Activated B cell treated with CpG ODN at 0.5 μM for 24 hours (primary cell): ENCODE measurements at regions of chr5 and their contacts with region 1.

Region 1: GRCh38 chr5:138752951-138753793 is at the start of gene CTNNA1:
- DNase-seq: peak; percentile 72
- ATAC-seq: peak; percentile 77
- H3K4me3 Mint-ChIP-seq: peak within 1 kb of the TSS; percentile 82
- H3K27ac Mint-ChIP-seq: peak within 1 kb of the TSS; percentile 53
- H3K4me1 Mint-ChIP-seq: peaks cover 26% of the 10 kb centered on the region
- H3K27me3 Mint-ChIP-seq: no peaks in the 10 kb centered on the region
- CTCF ChIP-seq: no peak
- total RNA-seq, gene CTNNA1: 76.0 and 77.7 TPM in 2 replicates

Region 2: DNA sequence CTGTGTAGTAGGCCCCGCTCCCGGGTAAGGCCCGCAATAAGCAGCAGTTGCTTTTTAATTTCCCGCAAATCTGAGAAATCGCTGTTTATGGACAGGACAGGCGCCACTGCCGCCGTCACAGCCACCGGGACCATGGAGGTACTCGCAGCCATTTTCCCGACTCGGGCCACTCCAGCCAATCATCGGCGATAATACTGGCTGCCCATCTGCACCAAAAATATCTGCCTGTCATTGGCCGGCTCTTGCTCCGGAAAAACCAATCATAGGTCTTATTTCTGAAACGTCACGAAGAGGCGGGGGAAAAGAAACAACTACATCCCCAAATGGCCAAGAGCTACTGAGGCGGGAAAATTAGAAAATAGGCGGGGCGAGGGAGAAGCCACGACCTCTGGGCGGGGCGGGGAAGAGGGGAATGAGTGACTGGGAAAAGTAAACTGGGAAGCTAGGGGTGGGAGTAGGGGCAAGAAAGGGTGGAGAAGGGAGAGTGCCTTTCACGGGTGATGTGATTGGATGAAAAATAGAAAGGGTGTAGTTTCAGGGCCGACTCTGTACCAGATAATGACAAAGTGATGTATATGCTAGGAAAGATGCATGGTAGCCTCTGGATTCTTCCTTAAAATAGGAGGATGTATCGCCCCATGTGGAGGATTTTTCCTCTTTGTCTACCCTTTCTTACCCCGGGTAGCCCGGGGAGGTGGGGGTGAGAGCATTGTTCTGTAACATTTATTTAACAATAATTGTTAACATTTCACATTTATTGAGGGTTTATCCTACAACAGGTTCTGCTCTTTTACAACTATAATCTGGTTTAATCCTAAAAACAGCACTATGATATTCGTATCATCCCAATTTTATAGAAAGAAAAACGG is 539.8 kb before region 1 on chr5 and contains the start of gene CDC23:
- CTCF ChIA-PET with region 1: no interaction called
- POLR2A ChIA-PET with region 1: no interaction called
- intact Hi-C with region 1: loop called (anchors 10 kb)
- DNase-seq: peak; percentile 67
- ATAC-seq: peak; percentile 96
- H3K4me3 Mint-ChIP-seq: peak within 1 kb of the TSS; percentile 99
- H3K27ac Mint-ChIP-seq: peak within 1 kb of the TSS; percentile 93
- H3K4me1 Mint-ChIP-seq: peaks cover 27% of the 10 kb centered on the region
- H3K27me3 Mint-ChIP-seq: no peaks in the 10 kb centered on the region
- CTCF ChIP-seq: no peak
- total RNA-seq, gene CDC23: 31.9 and 35.0 TPM in 2 replicates

Region 3: DNA sequence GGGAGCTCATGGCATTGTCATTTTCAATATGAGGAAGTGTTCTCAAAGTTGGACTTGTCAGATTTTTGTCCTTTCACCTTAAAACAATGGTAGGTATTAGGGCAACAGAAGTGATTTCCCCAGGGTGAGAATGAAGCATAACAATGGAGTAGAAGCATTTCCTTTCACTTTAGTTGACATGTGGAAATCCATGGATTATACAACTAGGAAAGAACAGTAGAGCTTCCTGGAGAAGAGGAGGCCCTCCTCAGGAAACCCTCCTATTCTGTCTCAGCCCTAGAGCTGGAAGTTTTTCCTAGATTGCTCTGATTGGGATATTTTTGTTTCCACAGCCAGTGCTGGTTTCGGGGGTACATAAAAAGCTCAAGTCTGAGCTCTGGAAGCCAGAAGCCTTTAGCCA is 328.1 kb before region 1 on chr5:
- CTCF ChIA-PET with region 1: no interaction called
- POLR2A ChIA-PET with region 1: no interaction called
- intact Hi-C with region 1: no loop called
- DNase-seq: no peak
- ATAC-seq: no peak
- H3K4me3 Mint-ChIP-seq: no peak overlapping the region
- H3K27ac Mint-ChIP-seq: no peak overlapping the region
- H3K4me1 Mint-ChIP-seq: no peaks in the 10 kb centered on the region
- H3K27me3 Mint-ChIP-seq: no peaks in the 10 kb centered on the region
- CTCF ChIP-seq: no peak

Region 4: GRCh38 chr5:138654281-138654867 is 98.8 kb before region 1 on chr5:
- CTCF ChIA-PET with region 1: no interaction called
- POLR2A ChIA-PET with region 1: no interaction called
- intact Hi-C with region 1: loop called (anchors 5 kb)
- DNase-seq: no peak
- ATAC-seq: peak; percentile 81
- H3K4me3 Mint-ChIP-seq: no peak overlapping the region
- H3K27ac Mint-ChIP-seq: peak overlapping the region; percentile 51
- H3K4me1 Mint-ChIP-seq: peaks cover 35% of the 10 kb centered on the region
- H3K27me3 Mint-ChIP-seq: peaks cover 45% of the 10 kb centered on the region
- CTCF ChIP-seq: no peak

Region 5: GRCh38 chr5:138737494-138738265 is 15.5 kb before region 1 on chr5:
- CTCF ChIA-PET with region 1: interaction called, 3 read pairs
- POLR2A ChIA-PET with region 1: interaction called, 12 read pairs
- intact Hi-C with region 1: loop called (anchors 1 kb)
- DNase-seq: no peak
- ATAC-seq: no peak
- H3K4me3 Mint-ChIP-seq: no peak overlapping the region
- H3K27ac Mint-ChIP-seq: no peak overlapping the region
- H3K4me1 Mint-ChIP-seq: peaks cover 12% of the 10 kb centered on the region
- H3K27me3 Mint-ChIP-seq: peaks cover 1% of the 10 kb centered on the region
- CTCF ChIP-seq: no peak

Region 6: GRCh38 chr5:139197710-139198669 is 444.8 kb after region 1 on chr5 and contains the start of gene SIL1:
- CTCF ChIA-PET with region 1: no interaction called
- POLR2A ChIA-PET with region 1: interaction called, 3 read pairs
- intact Hi-C with region 1: loop called (anchors 2 kb)
- DNase-seq: peak; percentile 91
- ATAC-seq: peak; percentile 98
- H3K4me3 Mint-ChIP-seq: peak within 1 kb of the TSS; percentile 91
- H3K27ac Mint-ChIP-seq: peak within 1 kb of the TSS; percentile 90
- H3K4me1 Mint-ChIP-seq: peaks cover 21% of the 10 kb centered on the region
- H3K27me3 Mint-ChIP-seq: no peaks in the 10 kb centered on the region
- CTCF ChIP-seq: no peak
- total RNA-seq, gene SIL1: 16.1 and 22.0 TPM in 2 replicates